Right ventricle myocardium superior (tissue), 1 donor: ENCODE measurements at regions of chr18 and their contacts with region 1.

Region 1: DNA sequence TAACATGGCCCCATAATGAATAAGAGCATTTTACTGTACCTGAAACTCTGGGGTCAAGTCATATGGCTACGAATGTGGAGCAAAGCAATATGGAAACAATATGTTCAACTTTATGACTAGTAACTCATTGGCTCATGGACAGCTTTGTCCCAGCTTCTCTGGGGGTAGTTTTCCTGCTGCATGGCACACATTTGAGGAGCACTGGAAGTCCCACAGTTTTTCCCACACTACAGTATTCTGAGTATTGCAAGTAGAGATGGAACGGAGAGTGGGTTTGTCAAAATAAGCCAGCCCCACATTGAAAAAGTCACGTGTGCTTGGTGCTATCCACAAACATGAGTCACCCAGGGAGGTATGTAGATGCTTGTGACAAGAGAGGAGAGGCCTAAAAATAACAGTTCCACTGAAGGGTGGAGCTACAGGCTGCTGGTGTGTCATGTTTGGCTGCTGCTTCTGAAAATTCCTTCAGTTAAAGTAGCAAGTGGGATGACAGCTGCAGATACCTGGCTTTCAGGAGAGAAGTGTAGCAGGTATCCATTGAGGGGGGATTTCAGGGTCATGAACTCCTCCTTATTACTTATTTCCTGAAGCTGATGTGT is 48.2 kb upstream of the CTAGE1 start:
- DNase-seq: no peak
- ATAC-seq: peak; percentile 89

Region 2: DNA sequence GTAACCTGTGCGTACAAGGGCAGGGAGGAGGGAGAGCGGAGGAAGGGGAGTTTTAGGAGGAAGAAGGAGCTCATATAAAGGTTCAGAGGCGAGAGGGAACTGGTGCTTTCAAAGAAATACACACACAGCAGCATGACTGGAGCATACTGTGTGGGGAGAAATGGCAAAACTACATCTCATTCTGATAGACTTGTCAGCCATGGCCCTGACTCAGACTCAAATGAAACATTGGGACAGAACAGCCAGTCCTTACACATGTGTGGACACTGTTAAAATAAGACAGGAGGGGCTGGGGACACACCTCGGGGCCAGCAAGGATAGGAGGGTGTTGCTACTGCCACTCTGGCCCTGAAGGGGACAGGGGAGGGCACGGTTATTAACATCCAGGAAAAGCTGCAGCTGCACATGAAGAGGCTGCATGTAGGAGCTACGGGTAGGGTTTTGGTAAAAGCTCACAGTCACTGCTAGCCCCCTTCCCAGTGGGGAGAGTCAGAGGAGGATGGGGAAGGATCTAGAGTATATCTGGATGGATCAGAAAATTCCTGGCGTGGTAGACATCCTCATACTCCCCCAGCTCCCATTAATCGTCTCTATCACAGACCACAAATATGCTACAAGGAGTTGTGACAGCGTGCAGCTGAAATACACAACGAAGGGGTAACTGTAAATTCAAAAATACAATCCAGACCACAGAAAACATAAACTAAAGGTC is 186.1 kb before region 1 on chr18:
- intact Hi-C with region 1: loop called (anchors 5 kb)
- DNase-seq: no peak
- ATAC-seq: no peak